ENCODE measurements at regions of chr1 and their contacts with region 1.

Region 1: DNA sequence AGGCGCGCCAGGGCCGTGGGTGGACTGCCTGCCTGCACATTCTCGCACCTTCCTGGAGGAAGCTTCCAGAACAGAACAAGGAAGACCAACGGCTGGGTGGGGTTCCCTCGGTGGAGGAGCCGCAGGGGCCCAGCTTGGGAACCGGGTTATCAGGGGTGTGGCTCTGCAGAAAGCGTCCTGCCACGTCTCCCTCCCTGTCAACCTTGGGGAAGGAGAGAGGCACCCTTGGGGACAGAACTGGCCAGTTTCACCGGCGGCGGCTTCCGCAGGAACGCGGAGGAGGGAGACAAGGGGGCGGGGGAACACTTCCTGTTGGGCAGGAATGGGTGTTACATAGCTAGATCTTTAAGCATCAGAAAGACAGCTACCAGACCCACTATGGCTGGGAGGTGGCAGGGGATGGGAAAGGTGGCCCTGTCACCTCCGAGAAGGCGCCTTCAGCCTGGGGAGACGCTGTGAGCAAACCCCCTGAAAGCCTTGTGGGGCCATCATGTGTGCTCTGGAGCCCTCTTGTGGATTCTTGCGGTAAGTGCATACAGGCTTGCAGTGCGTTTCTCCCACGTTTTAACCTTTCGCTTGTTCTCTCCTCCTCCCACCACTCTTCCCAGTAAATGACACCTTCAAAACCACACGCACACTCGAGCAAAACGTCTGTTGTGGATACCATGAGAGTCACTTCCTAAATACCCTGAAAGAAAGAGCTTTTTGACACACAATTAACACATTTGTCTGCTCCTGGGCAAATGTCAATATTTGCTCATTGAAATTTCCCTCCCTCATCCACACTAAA is 3.8 kb upstream of the PLEKHA6 start:
- DNase-seq: peak; percentile 52 to 90 (median 71)
- ATAC-seq: peak; percentile 99
- H3K4me3 ChIP-seq: peak overlapping the region; percentile 45 to 52
- H3K4me3 Mint-ChIP-seq: peak overlapping the region; percentile 77
- H3K27ac ChIP-seq: peak overlapping the region in 1 of 2 experiments; percentile 24
- H3K27ac Mint-ChIP-seq: no peak overlapping the region
- H3K4me1 ChIP-seq: peaks cover 10% of the 10 kb centered on the region
- H3K4me1 Mint-ChIP-seq: peaks cover 5% of the 10 kb centered on the region
- H3K27me3 ChIP-seq: no peaks in the 10 kb centered on the region
- H3K27me3 Mint-ChIP-seq: peaks cover 4% of the 10 kb centered on the region
- CTCF ChIP-seq: peak; percentile 74

Region 2: DNA sequence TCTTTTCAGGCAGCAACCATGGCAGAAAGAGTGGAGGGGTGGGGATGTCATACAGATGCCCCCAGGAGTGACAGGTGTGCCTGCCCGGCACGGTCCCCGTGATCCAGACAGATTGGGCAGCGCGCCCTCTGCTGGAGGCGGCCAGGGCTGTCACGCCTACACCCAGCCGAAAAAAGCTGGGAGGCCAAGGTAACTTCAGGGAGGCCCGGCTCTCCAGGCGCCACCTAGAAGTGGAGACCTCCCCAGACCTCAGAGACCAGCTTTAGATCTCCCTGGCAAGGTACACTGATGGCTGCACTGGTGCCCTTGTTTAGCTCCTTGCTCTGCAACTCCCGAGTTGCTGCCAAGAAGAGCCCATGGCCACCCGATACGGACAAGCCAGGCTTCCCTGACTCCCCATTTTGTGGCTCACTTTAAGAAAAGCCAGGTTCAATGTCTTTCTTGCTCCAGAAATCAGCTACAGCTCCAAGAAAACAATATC is 156.4 kb before region 1 on chr1:
- CTCF ChIA-PET with region 1: interaction called, 18 read pairs
- POLR2A ChIA-PET with region 1: no interaction called
- intact Hi-C with region 1: loop called (anchors 2 to 5 kb)
- DNase-seq: peak; percentile 56 to 84 (median 72)
- ATAC-seq: peak; percentile 96
- H3K4me3 ChIP-seq: no peak overlapping the region
- H3K4me3 Mint-ChIP-seq: no peak overlapping the region
- H3K27ac ChIP-seq: no peak overlapping the region
- H3K27ac Mint-ChIP-seq: no peak overlapping the region
- H3K4me1 ChIP-seq: peaks cover 12% of the 10 kb centered on the region
- H3K4me1 Mint-ChIP-seq: peaks cover 11% of the 10 kb centered on the region
- H3K27me3 ChIP-seq: no peaks in the 10 kb centered on the region
- H3K27me3 Mint-ChIP-seq: peaks cover 29% of the 10 kb centered on the region
- CTCF ChIP-seq: peak; percentile 73

Region 3: DNA sequence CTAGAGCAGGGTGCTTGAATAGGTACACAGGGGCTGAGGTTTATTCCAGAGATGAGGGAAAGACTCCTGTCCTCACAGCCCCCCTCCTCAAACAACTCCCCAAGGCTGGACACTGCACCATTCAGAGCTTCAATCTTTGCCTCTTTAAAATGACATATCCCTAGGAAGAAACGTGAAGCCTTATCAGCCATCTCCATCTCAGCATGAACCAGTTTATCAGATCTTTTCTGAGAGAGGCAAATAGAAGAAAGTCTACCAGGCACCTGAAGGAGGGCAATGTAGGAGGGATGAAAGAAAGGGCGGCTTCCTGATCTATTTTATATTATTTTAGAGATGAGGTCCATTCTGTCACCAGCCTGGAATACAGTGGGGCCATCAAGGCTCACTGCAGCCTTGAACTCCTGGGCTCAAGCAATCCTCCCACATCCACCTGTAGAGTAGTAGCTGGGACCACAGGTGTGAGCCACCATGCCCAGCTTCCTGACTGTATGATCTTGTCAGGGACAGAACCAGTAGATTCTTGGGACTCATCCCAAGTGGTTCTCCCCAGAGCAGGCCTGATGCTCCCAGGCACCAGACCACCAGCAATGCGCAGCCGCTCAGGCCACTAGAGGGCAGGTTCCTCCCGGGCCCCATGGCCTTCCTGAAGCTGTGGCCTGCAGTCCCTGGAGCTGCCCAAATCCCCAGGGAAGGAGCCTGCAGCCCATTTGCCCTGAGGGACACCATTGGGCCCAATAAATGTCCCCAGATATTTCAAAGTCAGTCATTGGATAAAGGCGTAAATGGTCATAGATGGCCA is 105.4 kb before region 1 on chr1:
- CTCF ChIA-PET with region 1: interaction called, 17 read pairs
- POLR2A ChIA-PET with region 1: no interaction called
- intact Hi-C with region 1: loop called in 1 of 2 experiments (anchors 1 kb)
- DNase-seq: peak in 6 of 9 experiments; percentile 9 to 52 (median 28)
- ATAC-seq: no peak
- H3K4me3 ChIP-seq: no peak overlapping the region
- H3K4me3 Mint-ChIP-seq: no peak overlapping the region
- H3K27ac ChIP-seq: no peak overlapping the region
- H3K27ac Mint-ChIP-seq: no peak overlapping the region
- H3K4me1 ChIP-seq: no peaks in the 10 kb centered on the region
- H3K4me1 Mint-ChIP-seq: no peaks in the 10 kb centered on the region
- H3K27me3 ChIP-seq: no peaks in the 10 kb centered on the region
- H3K27me3 Mint-ChIP-seq: no peaks in the 10 kb centered on the region
- CTCF ChIP-seq: peak; percentile 18

Region 4: GRCh38 chr1:204350857-204351573 is 12.5 kb before region 1 on chr1:
- CTCF ChIA-PET with region 1: interaction called, 17 read pairs
- POLR2A ChIA-PET with region 1: no interaction called
- intact Hi-C with region 1: no loop called
- DNase-seq: no peak
- ATAC-seq: no peak
- H3K4me3 ChIP-seq: no peak overlapping the region
- H3K4me3 Mint-ChIP-seq: no peak overlapping the region
- H3K27ac ChIP-seq: no peak overlapping the region
- H3K27ac Mint-ChIP-seq: no peak overlapping the region
- H3K4me1 ChIP-seq: no peaks in the 10 kb centered on the region
- H3K4me1 Mint-ChIP-seq: peaks cover 3% of the 10 kb centered on the region
- H3K27me3 ChIP-seq: no peaks in the 10 kb centered on the region
- H3K27me3 Mint-ChIP-seq: peaks cover 2% of the 10 kb centered on the region
- CTCF ChIP-seq: no peak

Region 5: DNA sequence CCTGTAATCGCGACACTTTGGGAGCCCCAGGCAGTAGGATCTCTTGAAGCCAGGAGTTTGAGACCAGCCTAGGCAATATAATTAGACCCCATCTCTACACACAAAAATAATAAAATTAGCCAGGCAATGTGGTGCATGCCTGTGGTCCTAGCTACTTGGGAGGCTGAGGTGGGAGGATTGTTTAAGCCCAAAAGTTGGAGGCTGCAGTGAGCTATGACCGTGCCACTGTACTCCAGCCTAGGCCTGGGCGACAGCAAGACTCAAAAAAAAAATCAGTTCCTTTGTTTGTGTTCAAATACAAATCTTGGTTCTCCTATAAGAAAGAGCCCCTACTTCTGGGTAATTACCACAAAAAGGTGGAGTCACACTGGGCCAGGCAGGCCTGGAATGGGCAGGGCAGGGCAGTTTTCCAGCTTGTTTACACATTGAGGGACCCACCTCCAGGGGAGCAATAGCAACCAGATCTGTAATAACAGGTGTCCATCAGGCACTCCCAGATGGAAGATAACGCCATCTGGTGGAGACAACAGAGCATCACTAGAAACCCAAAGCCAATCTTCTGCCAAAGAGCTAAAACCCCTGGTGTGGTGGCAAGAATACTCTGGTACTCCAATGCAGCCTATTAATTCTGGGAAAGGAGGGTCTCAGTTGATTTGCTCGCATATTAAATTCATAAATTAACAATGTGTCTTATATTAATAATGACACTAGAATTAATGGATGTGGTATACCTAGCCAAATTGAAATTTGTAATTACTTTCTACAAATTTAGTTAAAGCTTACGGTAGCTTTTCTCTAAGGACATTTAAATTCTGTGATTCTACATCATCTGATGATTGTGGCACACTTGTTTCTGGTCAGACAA is 34.9 kb after region 1 on chr1:
- CTCF ChIA-PET with region 1: interaction called, 19 read pairs
- POLR2A ChIA-PET with region 1: interaction called, 3 read pairs
- intact Hi-C with region 1: loop called in 1 of 2 experiments (anchors 1 kb)
- DNase-seq: peak; percentile 16 to 86 (median 54)
- ATAC-seq: peak; percentile 97
- H3K4me3 ChIP-seq: no peak overlapping the region
- H3K4me3 Mint-ChIP-seq: no peak overlapping the region
- H3K27ac ChIP-seq: peak overlapping the region in 1 of 2 experiments; percentile 21
- H3K27ac Mint-ChIP-seq: peak overlapping the region; percentile 80
- H3K4me1 ChIP-seq: peaks cover 4% of the 10 kb centered on the region
- H3K4me1 Mint-ChIP-seq: peaks cover 9% of the 10 kb centered on the region
- H3K27me3 ChIP-seq: no peaks in the 10 kb centered on the region
- H3K27me3 Mint-ChIP-seq: no peaks in the 10 kb centered on the region
- CTCF ChIP-seq: peak; percentile 87

Measured in CD8-positive, alpha-beta T cell (primary cell).